ENCODE measurements at regions of chr22 and their contacts with region 1.

Region 1: DNA sequence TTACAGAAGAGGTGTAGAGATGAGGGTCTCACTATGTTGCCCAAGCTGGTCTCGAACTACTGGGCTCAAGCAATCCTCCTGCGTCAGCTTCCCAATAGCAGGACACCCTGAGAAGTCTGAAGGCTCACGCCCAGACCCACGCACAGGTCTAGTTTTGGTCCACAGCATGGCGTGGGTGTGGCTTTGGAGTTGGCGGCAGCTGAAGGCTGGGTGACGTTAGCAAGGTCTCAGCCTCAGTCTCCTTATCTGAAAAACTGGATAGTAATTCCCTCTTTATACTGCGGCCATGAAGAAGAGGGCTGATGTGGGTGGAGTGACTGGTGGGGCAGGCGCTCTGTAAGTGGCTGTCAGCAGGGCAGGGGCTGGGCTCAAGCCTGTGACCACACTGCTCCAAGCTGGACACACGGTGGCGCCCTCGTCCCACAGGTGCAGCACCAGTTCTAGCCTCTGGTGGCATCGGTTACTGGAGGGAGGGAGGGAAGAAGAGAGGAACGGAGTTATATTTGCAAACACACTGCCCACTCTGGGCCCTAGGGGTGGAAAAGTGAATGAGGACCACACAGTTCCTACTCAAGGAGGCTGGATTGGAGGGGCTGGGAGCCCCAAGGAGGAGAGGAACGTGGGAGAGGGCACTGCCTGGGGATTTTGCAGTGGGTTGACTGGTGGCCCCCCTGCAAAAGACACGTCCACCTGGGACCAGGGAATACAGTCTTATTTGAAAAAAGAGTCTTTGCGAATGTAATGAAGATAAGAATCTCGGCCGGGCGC is 19.6 kb upstream of the CARD10 start:
- DNase-seq: peak; percentile 80
- ATAC-seq: peak; percentile 98
- H3K4me3 ChIP-seq: no peak overlapping the region
- H3K27ac ChIP-seq: no peak overlapping the region
- H3K4me1 ChIP-seq: peaks cover 27% of the 10 kb centered on the region
- H3K27me3 ChIP-seq: no peaks in the 10 kb centered on the region
- CTCF ChIP-seq: peak; percentile 96 to 99 (median 96)
- EP300 ChIP-seq: peak in 1 of 2 experiments; percentile 37; a peak in 1 of 4 replicates
- POLR2A ChIP-seq: no peak
- RAD21 ChIP-seq: peak; percentile 96

Region 2: DNA sequence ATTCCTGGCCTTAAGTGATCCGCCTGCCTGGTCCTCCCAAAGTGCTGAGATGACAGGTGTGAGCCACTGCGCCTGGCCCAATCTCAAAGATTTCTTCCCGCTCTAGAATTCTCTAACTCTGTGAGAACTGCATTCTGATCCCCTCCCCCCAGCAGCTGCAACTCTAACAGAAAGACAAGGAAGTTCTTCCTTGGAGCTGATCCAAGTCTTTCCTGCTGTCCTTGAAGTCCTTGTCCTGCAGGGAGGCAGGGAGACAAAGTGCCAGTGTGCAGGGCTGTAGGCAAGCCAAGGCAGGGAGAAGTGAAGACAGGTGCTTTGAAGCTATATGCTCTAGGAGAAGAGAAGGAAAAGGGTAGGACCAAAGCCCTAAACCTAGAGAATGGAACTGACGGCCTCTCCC is 60.4 kb after region 1 on chr22:
- CTCF ChIA-PET with region 1: interaction called, 419 read pairs
- POLR2A ChIA-PET with region 1: no interaction called
- RAD21 ChIA-PET with region 1: interaction called, 4 read pairs
- SMC1A ChIA-PET with region 1: interaction called, 3 read pairs
- in situ Hi-C with region 1: no loop called
- intact Hi-C with region 1: no loop called
- DNase-seq: no peak
- ATAC-seq: no peak
- H3K4me3 ChIP-seq: no peak overlapping the region
- H3K27ac ChIP-seq: no peak overlapping the region
- H3K4me1 ChIP-seq: no peaks in the 10 kb centered on the region
- H3K27me3 ChIP-seq: 0 out of 4 replicates have a peak, but pooled peaks cover 0 to 1% of the 10 kb centered on the region in 2 experiments
- CTCF ChIP-seq: no peak
- EP300 ChIP-seq: no peak
- POLR2A ChIP-seq: no peak
- RAD21 ChIP-seq: no peak

Region 3: GRCh38 chr22:37676736-37677492 is 138.1 kb after region 1 on chr22:
- CTCF ChIA-PET with region 1: no interaction called
- POLR2A ChIA-PET with region 1: no interaction called
- RAD21 ChIA-PET with region 1: interaction called, 3 read pairs
- SMC1A ChIA-PET with region 1: no interaction called
- in situ Hi-C with region 1: no loop called
- intact Hi-C with region 1: loop called (anchors 5 kb)
- DNase-seq: no peak
- ATAC-seq: peak; percentile 73
- H3K4me3 ChIP-seq: peak overlapping the region; percentile 91
- H3K27ac ChIP-seq: peak overlapping the region; percentile 85
- H3K4me1 ChIP-seq: peaks cover 37% of the 10 kb centered on the region
- H3K27me3 ChIP-seq: no peaks in the 10 kb centered on the region
- CTCF ChIP-seq: no peak
- EP300 ChIP-seq: no peak
- POLR2A ChIP-seq: peak; percentile 78
- RAD21 ChIP-seq: no peak

Region 4: DNA sequence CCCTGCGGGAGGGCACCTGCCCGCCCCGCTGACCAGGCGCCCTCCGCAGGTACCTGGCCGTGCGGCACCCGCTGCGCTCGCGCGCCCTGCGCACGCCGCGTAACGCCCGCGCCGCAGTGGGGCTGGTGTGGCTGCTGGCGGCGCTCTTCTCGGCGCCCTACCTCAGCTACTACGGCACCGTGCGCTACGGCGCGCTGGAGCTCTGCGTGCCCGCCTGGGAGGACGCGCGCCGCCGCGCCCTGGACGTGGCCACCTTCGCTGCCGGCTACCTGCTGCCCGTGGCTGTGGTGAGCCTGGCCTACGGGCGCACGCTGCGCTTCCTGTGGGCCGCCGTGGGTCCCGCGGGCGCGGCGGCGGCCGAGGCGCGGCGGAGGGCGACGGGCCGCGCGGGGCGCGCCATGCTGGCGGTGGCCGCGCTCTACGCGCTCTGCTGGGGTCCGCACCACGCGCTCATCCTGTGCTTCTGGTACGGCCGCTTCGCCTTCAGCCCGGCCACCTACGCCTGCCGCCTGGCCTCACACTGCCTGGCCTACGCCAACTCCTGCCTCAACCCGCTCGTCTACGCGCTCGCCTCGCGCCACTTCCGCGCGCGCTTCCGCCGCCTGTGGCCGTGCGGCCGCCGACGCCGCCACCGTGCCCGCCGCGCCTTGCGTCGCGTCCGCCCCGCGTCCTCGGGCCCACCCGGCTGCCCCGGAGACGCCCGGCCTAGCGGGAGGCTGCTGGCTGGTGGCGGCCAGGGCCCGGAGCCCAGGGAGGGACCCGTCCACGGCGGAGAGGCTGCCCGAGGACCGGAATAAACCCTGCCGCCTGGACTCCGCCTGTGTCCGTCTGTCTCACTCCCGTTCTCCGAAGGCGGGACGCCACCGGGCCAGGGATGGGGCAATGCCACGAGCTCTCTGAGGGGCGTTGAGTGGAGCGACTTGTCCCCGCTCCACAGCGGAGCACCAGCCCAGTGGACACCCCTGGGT is 286.2 kb after region 1 on chr22:
- CTCF ChIA-PET with region 1: no interaction called
- POLR2A ChIA-PET with region 1: no interaction called
- RAD21 ChIA-PET with region 1: no interaction called
- SMC1A ChIA-PET with region 1: no interaction called
- in situ Hi-C with region 1: no loop called
- intact Hi-C with region 1: no loop called
- DNase-seq: no peak
- ATAC-seq: no peak
- H3K4me3 ChIP-seq: no peak overlapping the region
- H3K27ac ChIP-seq: no peak overlapping the region
- H3K4me1 ChIP-seq: no peaks in the 10 kb centered on the region
- H3K27me3 ChIP-seq: no peaks in the 10 kb centered on the region
- CTCF ChIP-seq: no peak
- EP300 ChIP-seq: no peak
- POLR2A ChIP-seq: no peak
- RAD21 ChIP-seq: no peak